GM12878 (cell line): ENCODE measurements at regions of chr6 and their contacts with region 1.

Region 1: DNA sequence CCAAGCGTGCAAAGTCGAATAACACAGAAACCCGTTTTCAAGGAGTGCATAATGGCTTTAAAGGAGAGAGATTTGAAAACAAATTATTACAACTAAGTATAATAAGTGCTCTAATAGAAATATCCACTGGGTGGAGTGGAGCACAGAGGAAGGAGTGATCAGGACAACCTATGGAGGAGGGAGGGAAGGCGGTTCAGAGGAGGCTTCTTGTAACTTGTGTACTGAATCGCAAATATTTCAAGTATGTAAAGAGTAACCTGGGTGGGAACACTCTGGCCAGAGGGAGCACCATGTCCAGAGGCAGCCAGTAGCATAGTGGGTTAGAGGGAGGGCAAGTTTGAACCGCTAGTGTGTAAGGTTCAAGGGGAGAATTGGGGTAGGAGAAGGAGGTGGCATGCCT is 21.6 kb upstream of the TNFAIP3 start:
- DNase-seq: no peak
- ATAC-seq: no peak
- H3K4me3 ChIP-seq: no peak overlapping the region
- H3K27ac ChIP-seq: no peak overlapping the region
- H3K4me1 ChIP-seq: peaks cover 20% of the 10 kb centered on the region
- H3K27me3 ChIP-seq: no peaks in the 10 kb centered on the region
- CTCF ChIP-seq: no peak
- EP300 ChIP-seq: no peak
- POLR2A ChIP-seq: no peak
- RAD21 ChIP-seq: no peak

Region 2: DNA sequence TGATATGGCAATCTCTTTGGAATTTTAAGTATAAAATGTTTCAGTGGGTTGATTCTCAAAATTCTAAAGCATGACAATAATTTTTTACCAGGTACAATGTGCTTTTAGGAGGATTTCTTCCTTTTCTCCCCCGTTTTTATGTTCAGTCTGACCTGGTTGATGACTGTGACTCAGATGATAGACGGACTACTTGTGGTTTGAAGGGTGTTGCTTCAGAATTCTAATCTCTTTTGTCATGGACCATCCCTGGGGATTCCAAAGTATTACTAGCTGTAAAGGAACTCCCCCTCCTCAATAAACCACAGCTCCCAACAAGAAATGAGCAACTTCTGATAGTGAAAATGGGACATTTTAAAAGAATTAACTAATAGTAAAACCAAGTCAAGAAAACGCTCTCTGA is 13.3 kb before region 1 on chr6:
- CTCF ChIA-PET with region 1: interaction called, 4 read pairs
- POLR2A ChIA-PET with region 1: interaction called, 10 read pairs
- RAD21 ChIA-PET with region 1: interaction called, 3 read pairs
- SMC1A ChIA-PET with region 1: interaction called, 10 read pairs
- in situ Hi-C with region 1: no loop called
- intact Hi-C with region 1: no loop called
- DNase-seq: no peak
- ATAC-seq: no peak
- H3K4me3 ChIP-seq: no peak overlapping the region
- H3K27ac ChIP-seq: no peak overlapping the region
- H3K4me1 ChIP-seq: peaks cover 42% of the 10 kb centered on the region
- H3K27me3 ChIP-seq: no peaks in the 10 kb centered on the region
- CTCF ChIP-seq: no peak
- EP300 ChIP-seq: no peak
- POLR2A ChIP-seq: no peak
- RAD21 ChIP-seq: no peak

Region 3: DNA sequence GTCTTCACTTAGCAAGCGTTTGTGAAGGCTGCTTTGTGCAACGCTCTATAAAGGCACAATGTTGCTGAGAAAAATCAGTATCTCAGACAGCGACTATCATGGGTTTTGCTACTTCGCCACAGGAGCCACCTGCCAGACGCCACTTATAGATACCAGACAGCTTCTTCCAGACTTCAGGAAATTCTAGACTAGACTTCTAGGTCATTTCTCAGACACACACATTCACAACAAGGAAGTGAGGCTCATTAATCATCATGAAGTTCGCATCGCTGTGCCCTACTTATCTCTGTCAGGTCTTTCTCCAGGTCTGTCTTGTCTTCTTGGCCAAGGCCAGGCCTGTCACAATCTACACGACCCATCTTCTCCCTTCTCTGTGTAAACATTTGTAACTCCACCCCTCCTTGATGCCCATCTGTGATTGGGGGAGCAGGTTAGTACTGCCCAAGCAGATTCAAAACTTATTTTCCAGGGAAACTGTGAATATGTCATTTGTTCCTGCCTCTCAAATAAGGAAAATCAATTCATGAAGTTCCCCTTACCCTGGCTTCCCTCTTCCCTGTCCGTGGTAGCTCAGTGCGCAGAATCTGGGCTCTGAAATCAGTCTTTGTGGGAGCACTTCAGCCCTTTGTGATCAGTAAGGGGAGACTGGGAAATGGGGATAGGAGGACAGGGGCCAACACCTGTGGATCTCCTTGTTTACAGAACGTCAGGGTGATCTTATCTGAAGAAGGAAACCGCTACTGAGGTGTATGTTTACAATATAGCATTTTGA is 137.1 kb after region 1 on chr6:
- CTCF ChIA-PET with region 1: no interaction called
- POLR2A ChIA-PET with region 1: no interaction called
- RAD21 ChIA-PET with region 1: no interaction called
- SMC1A ChIA-PET with region 1: no interaction called
- in situ Hi-C with region 1: no loop called
- intact Hi-C with region 1: no loop called
- DNase-seq: no peak
- ATAC-seq: no peak
- H3K4me3 ChIP-seq: no peak overlapping the region
- H3K27ac ChIP-seq: no peak overlapping the region
- H3K4me1 ChIP-seq: peaks cover 17% of the 10 kb centered on the region
- H3K27me3 ChIP-seq: no peaks in the 10 kb centered on the region
- CTCF ChIP-seq: no peak
- EP300 ChIP-seq: no peak
- POLR2A ChIP-seq: no peak
- RAD21 ChIP-seq: no peak